Activated CD4-positive, alpha-beta T cell treated with anti-CD3 and anti-CD28 coated beads for 36 hours (primary cell): ENCODE measurements at regions of chr1 and their contacts with region 1.

Region 1: GRCh38 chr1:31010086-31010989 is 55.2 kb downstream of the PUM1 start:
- DNase-seq: peak; percentile 60
- ATAC-seq: peak; percentile 98
- H3K4me3 Mint-ChIP-seq: no peak overlapping the region
- H3K27ac Mint-ChIP-seq: peak overlapping the region; percentile 88
- H3K4me1 Mint-ChIP-seq: peaks cover 68% of the 10 kb centered on the region
- H3K27me3 Mint-ChIP-seq: no peaks in the 10 kb centered on the region

Region 2: DNA sequence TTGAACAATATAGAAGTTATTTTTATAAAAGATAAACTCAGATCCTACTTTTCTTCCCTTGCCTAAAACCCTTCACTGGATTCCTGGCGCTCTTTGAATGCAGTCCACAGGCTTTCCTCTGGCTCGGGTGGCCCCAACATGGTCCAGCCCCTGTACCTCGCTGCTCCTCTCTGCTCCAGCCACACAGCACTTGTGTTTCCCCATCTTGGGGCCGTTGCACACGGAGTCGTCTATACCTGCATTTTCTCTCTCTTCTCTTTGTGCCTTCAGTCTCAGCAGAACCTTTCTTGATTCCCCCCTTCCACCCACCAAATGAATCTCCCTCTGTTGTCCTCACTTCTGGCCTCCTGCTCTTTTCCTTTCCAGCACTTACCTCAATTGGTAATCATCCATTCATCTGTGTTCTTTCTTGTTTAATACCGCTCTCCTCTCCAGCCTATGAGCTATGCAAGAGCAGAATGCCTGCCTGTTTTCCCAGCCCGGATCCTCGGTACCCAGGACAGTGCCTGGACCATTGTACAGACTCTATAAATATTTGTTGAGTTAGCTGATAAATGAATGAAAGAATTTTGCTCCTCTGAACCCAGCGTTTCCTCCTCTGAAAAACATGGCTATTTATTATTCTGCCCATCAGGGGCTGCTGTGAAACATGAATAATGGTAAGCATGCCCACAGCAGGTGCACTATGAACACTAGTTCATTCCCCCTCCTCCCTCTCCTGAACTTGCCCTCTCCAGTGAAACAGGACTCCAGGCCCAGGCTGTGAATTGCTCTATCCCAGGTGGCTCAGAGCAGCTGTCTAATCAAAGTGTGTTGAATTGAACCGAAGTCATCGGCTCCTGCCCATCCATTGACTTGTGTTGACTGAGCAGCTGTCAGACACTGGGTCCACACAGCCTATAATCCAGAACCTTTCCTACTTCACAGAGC is 1507.2 kb before region 1 on chr1:
- CTCF ChIA-PET with region 1: no interaction called
- POLR2A ChIA-PET with region 1: no interaction called
- intact Hi-C with region 1: no loop called
- DNase-seq: no peak
- ATAC-seq: no peak
- H3K4me3 Mint-ChIP-seq: no peak overlapping the region
- H3K27ac Mint-ChIP-seq: no peak overlapping the region
- H3K4me1 Mint-ChIP-seq: no peaks in the 10 kb centered on the region
- H3K27me3 Mint-ChIP-seq: peaks cover 27% of the 10 kb centered on the region

Region 3: DNA sequence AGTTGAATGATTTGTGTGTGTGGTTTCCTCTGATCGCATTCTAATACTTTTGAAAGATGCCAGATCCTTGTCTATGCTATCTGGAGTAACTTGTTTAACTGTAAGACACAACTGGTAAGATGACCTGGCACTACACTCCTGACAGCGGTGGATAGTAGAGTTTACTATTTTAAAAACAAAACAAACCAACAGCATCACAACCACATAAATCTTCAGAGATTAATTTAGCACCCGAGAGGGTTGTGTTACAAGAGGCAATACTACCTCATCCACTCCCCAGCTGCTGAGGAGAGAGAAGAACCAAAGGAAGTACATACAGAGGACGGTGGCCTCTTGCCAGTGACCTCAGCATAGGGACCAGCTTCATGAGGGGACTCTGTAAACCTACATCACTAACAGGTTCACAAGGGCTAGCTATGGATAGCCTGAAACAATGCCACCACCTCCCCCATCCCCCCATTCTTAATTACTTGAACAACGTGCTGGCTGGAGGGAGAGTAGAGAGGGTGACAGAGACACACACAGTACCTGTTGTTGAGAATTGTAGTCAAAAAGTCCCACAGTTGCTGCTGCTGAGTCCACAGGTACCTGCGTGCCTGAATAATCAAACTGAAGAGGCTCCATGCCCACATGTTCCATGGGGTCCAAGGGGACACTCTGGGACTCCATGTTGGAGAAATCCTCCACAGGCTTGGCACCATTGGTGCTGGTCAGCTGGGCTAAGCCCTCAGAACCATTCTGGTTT is 18.3 kb before region 1 on chr1:
- CTCF ChIA-PET with region 1: interaction called, 7 read pairs
- POLR2A ChIA-PET with region 1: interaction called, 6 read pairs
- intact Hi-C with region 1: loop called in 1 of 2 experiments (anchors 1 kb)
- DNase-seq: no peak
- ATAC-seq: no peak
- H3K4me3 Mint-ChIP-seq: no peak overlapping the region
- H3K27ac Mint-ChIP-seq: peak overlapping the region; percentile 6
- H3K4me1 Mint-ChIP-seq: peaks cover 63% of the 10 kb centered on the region
- H3K27me3 Mint-ChIP-seq: no peaks in the 10 kb centered on the region

Region 4: GRCh38 chr1:31036749-31037500 is 26.6 kb after region 1 on chr1:
- CTCF ChIA-PET with region 1: no interaction called
- POLR2A ChIA-PET with region 1: interaction called, 3 read pairs
- intact Hi-C with region 1: loop called in 1 of 2 experiments (anchors 1 kb)
- DNase-seq: no peak
- ATAC-seq: peak; percentile 89
- H3K4me3 Mint-ChIP-seq: no peak overlapping the region
- H3K27ac Mint-ChIP-seq: peak overlapping the region; percentile 40
- H3K4me1 Mint-ChIP-seq: peaks cover 66% of the 10 kb centered on the region
- H3K27me3 Mint-ChIP-seq: no peaks in the 10 kb centered on the region

Region 5: DNA sequence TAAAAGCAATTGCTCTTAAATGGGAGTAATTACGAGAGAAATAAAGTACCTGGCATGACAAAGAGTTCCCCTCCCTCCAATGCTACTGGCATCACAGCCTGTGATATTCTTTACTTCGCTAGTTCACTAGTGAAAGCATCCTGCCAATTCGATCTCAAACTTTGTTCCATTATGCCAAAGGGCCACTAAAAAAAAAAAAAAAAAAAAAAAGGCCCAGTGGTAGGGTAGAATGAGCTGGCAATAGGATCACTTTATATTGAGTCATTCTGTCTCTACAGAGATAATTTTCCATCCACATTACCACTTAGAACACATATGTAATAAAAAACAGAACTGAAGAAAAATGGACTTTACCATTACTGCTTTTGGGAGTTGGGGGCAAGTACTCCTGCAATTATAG is 44.0 kb after region 1 on chr1:
- CTCF ChIA-PET with region 1: interaction called, 3 read pairs
- POLR2A ChIA-PET with region 1: interaction called, 7 read pairs
- intact Hi-C with region 1: loop called in 1 of 2 experiments (anchors 1 kb)
- DNase-seq: peak; percentile 21
- ATAC-seq: peak; percentile 79
- H3K4me3 Mint-ChIP-seq: no peak overlapping the region
- H3K27ac Mint-ChIP-seq: peak overlapping the region; percentile 74
- H3K4me1 Mint-ChIP-seq: peaks cover 63% of the 10 kb centered on the region
- H3K27me3 Mint-ChIP-seq: no peaks in the 10 kb centered on the region